AG04450 (cell line): ENCODE measurements at regions of chr6 and their contacts with region 1.

Region 1: GRCh38 chr6:118787724-118788423 is 106.1 kb upstream of the ASF1A start:
- DNase-seq: no peak
- H3K4me3 ChIP-seq: no peak overlapping the region
- H3K27ac ChIP-seq: no peak overlapping the region
- H3K27me3 ChIP-seq: no peaks in the 10 kb centered on the region
- CTCF ChIP-seq: no peak

Region 2: GRCh38 chr6:118748311-118749062 is 39.4 kb before region 1 on chr6:
- CTCF ChIA-PET with region 1: no interaction called
- POLR2A ChIA-PET with region 1: no interaction called
- DNase-seq: no peak
- H3K4me3 ChIP-seq: peak overlapping the region; percentile 32
- H3K27ac ChIP-seq: no peak overlapping the region
- H3K27me3 ChIP-seq: no peaks in the 10 kb centered on the region
- CTCF ChIP-seq: no peak

Region 3: GRCh38 chr6:118776607-118777549 is 11.0 kb before region 1 on chr6:
- CTCF ChIA-PET with region 1: interaction called, 14 read pairs
- POLR2A ChIA-PET with region 1: no interaction called
- DNase-seq: peak; percentile 34
- H3K4me3 ChIP-seq: no peak overlapping the region
- H3K27ac ChIP-seq: no peak overlapping the region
- H3K27me3 ChIP-seq: peaks cover 4% of the 10 kb centered on the region
- CTCF ChIP-seq: peak; percentile 81

Region 4: GRCh38 chr6:118800394-118801071 is 12.7 kb after region 1 on chr6:
- CTCF ChIA-PET with region 1: interaction called, 49 read pairs
- POLR2A ChIA-PET with region 1: no interaction called
- DNase-seq: peak; percentile 69
- H3K4me3 ChIP-seq: peak overlapping the region; percentile 31; the same call in 1 of the 2 replicates
- H3K27ac ChIP-seq: no peak overlapping the region
- H3K27me3 ChIP-seq: no peaks in the 10 kb centered on the region
- CTCF ChIP-seq: peak; percentile 96

Region 5: DNA sequence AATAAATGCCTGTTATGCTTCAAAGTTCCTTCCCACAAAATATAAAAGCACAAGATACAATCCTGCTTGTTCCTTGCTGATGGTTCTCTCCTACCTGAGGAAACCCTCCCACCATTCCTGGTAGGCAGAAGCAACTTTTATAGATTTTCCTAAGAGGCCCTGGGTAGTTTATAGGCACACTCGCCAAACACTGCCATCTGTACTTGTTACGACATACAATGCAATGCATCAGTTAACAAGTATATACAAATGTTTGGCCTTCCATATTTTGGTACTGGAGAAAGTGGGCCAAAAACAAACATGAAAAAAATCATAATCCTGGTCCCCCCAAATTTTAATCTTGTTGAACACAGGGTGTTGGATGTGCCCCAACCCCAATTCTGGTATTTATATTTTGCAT is 130.5 kb after region 1 on chr6:
- CTCF ChIA-PET with region 1: no interaction called
- POLR2A ChIA-PET with region 1: no interaction called
- DNase-seq: no peak
- H3K4me3 ChIP-seq: no peak overlapping the region
- H3K27ac ChIP-seq: no peak overlapping the region
- H3K27me3 ChIP-seq: no peaks in the 10 kb centered on the region
- CTCF ChIP-seq: no peak